Naive thymus-derived CD4-positive, alpha-beta T cell (primary cell): ENCODE measurements at regions of chr10 and their contacts with region 1.

Region 1: GRCh38 chr10:118720685-118721538 is 33.9 kb downstream of the CACUL1 start:
- DNase-seq: peak; percentile 15 to 75 (median 64)
- ATAC-seq: peak; percentile 78
- H3K4me3 ChIP-seq: no peak overlapping the region
- H3K4me3 Mint-ChIP-seq: no peak overlapping the region
- H3K27ac ChIP-seq: no peak overlapping the region
- H3K27ac Mint-ChIP-seq: peak overlapping the region in 1 of 9 donors; percentile 21
- H3K4me1 ChIP-seq: peaks cover 0 to 8% of the 10 kb centered on the region in 2 donors
- H3K4me1 Mint-ChIP-seq: peaks cover 6 to 36% (median 24%) of the 10 kb centered on the region in 7 donors
- H3K27me3 ChIP-seq: no peaks in the 10 kb centered on the region
- H3K27me3 Mint-ChIP-seq: no peaks in the 10 kb centered on the region

Region 2: DNA sequence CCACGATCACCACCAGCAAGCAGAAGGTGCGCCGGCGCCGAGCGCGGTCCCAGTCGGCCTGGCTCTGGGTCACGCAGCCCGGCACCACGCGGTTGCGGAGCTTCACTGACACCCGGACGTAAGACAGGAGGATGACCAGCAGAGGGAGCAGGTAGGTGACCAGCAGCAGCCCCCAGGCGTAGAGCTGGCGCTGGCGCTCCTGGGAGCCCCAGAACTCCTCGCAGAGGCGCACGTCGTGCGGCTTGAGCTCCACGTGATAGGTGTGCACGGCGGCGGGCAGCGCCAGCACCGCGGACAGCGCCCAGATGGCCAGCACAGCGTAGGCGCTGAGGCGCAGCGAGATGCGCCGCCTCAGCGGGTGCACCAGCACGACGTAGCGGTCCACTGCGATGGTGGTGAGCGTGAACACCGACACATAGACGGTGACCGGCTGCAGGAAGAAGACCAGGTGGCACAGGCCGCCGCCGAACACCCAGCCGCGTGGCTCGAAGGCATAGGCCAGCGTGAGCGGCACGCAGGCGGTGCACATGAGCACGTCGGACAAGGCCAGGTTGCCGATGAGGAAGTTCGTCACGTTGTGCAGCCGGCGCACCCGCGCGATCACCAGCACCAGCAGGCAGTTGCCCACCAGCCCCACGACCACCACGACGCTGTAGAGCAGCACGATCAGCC is 126.4 kb before region 1 on chr10:
- CTCF ChIA-PET with region 1: interaction called, 13 read pairs
- POLR2A ChIA-PET with region 1: no interaction called
- intact Hi-C with region 1: loop called in 1 of 2 experiments (anchors 1 kb)
- DNase-seq: peak; percentile 21 to 59 (median 35)
- ATAC-seq: peak; percentile 81
- H3K4me3 ChIP-seq: no peak overlapping the region
- H3K4me3 Mint-ChIP-seq: peak overlapping the region in 7 of 10 donors; percentile 18 to 75 (median 53)
- H3K27ac ChIP-seq: no peak overlapping the region
- H3K27ac Mint-ChIP-seq: no peak overlapping the region
- H3K4me1 ChIP-seq: peaks cover 0 to 17% of the 10 kb centered on the region in 2 donors
- H3K4me1 Mint-ChIP-seq: peaks cover 9 to 37% (median 27%) of the 10 kb centered on the region in 7 donors
- H3K27me3 ChIP-seq: peaks cover 0 to 17% of the 10 kb centered on the region in 2 donors
- H3K27me3 Mint-ChIP-seq: peaks cover 54 to 67% (median 65%) of the 10 kb centered on the region in 5 donors

Region 3: GRCh38 chr10:118850418-118851061 is 129.6 kb after region 1 on chr10:
- CTCF ChIA-PET with region 1: no interaction called
- POLR2A ChIA-PET with region 1: no interaction called
- intact Hi-C with region 1: loop called in 1 of 2 experiments (anchors 1 kb)
- DNase-seq: peak in 8 of 9 donors; percentile 27 to 72 (median 37)
- ATAC-seq: peak; percentile 62
- H3K4me3 ChIP-seq: no peak overlapping the region
- H3K4me3 Mint-ChIP-seq: no peak overlapping the region
- H3K27ac ChIP-seq: no peak overlapping the region
- H3K27ac Mint-ChIP-seq: no peak overlapping the region
- H3K4me1 ChIP-seq: no peaks in the 10 kb centered on the region
- H3K4me1 Mint-ChIP-seq: peaks cover 0 to 3% (median 0%) of the 10 kb centered on the region in 7 donors
- H3K27me3 ChIP-seq: no peaks in the 10 kb centered on the region
- H3K27me3 Mint-ChIP-seq: peaks cover 0 to 9% (median 6%) of the 10 kb centered on the region in 5 donors